ENCODE measurements at regions of chr3 and their contacts with region 1.

Region 1: GRCh38 chr3:149120051-149120972 is 9.1 kb upstream of the HPS3 start:
- DNase-seq: peak; percentile 33
- H3K4me3 ChIP-seq: no peak overlapping the region
- H3K27ac ChIP-seq: no peak overlapping the region
- H3K27me3 ChIP-seq: no peaks in the 10 kb centered on the region
- CTCF ChIP-seq: peak; percentile 59

Region 2: DNA sequence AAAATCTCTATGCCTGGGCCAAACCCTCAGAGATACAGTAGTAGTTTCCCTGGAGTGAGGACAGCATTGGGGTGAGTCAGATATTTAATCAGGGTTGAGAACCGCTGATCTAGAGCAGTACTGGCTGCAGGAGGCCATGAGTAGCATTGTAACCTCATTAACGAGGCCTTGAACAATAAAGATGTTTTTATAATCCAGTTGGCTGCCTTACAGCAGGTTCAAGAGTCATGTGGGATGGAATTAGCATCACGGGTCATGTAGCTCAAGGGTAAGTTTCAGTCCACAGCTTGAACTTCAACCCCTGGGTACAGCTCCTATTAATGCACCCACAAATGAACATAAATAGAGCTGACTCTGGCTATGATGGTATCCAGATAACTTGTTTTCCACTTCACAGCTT is 14.3 kb after region 1 on chr3:
- CTCF ChIA-PET with region 1: interaction called, 25 read pairs
- POLR2A ChIA-PET with region 1: interaction called, 3 read pairs
- DNase-seq: no peak
- H3K4me3 ChIP-seq: no peak overlapping the region
- H3K27ac ChIP-seq: no peak overlapping the region
- H3K27me3 ChIP-seq: no peaks in the 10 kb centered on the region
- CTCF ChIP-seq: no peak

Region 3: DNA sequence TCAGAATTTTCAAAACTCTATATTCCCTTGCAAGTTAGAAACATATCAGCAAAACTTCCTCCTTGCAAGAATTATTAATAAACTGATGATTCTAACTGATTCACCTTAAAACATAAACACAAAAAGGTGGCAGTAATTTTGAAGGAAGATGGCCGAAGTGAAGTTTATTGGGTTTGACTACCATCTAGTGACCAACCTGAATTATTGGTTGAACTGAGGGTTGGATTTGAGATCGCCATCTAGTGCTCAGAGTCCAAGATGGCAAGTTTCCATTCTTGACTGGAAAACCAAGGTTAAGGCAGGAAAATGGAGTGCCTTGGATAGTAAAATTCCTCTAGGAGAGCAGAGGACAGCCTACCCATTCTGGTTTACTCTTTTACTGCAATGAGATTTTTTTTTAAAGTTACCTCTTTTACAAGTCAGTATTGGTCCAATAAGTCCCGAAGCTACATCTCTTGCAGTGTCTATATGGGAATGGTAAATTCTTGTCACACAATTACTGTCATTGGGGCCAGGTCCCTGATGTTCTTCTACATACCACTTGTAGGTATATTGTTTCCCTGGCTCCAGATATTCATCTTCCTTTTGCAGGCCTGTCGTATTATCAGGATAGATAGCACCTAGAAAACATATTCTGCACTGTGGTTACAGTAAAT is 152.9 kb after region 1 on chr3:
- CTCF ChIA-PET with region 1: interaction called, 153 read pairs
- POLR2A ChIA-PET with region 1: interaction called, 3 read pairs
- DNase-seq: peak; percentile 79
- H3K4me3 ChIP-seq: no peak overlapping the region
- H3K27ac ChIP-seq: no peak overlapping the region
- H3K27me3 ChIP-seq: no peaks in the 10 kb centered on the region
- CTCF ChIP-seq: peak; percentile 98

Region 4: DNA sequence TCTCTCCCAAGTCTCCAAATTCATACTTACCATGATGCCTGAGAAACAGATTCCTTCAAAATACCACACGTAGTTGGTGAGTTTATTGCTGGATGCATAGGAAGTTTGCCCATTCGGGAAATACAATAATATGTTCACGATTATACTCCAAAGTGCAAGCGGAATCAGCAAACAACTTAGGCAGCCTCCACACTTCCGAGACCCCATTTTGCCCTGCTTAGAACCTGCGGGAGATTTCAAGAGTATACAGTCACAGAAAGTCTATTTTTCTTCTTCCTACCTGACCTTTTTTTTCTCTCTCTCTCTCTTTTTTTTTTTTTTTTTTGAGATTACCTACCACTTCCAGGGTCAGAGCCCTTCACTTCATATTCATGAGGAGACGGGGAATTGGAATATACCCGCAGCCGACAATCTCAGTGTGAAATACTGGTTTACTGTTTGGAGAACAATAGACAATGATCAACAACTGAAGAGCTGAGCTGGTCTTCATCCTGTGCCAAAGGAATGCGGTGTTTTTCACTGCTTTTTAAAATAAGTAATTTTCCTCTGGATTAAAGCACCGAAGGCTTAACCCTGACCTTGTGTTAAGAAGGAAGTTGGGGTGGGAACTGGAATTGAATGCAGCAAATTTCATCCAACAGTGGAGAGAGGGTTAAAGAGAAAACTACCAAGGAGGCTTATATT is 213.0 kb after region 1 on chr3 and contains the start of gene TM4SF18:
- CTCF ChIA-PET with region 1: interaction called, 18 read pairs
- POLR2A ChIA-PET with region 1: no interaction called
- DNase-seq: no peak
- H3K4me3 ChIP-seq: no peak within 1 kb of the TSS
- H3K27ac ChIP-seq: no peak within 1 kb of the TSS
- H3K27me3 ChIP-seq: no peaks in the 10 kb centered on the region
- CTCF ChIP-seq: no peak
- polyA plus RNA-seq, gene TM4SF18: 0.09 TPM in 1 of 2 replicates, not detected in the other

Measured in AG04450 (cell line).